Activated CD4-positive, alpha-beta T cell treated with anti-CD3 and anti-CD28 coated beads for 36 hours (primary cell): ENCODE measurements at regions of chr9 and their contacts with region 1.

Region 1: DNA sequence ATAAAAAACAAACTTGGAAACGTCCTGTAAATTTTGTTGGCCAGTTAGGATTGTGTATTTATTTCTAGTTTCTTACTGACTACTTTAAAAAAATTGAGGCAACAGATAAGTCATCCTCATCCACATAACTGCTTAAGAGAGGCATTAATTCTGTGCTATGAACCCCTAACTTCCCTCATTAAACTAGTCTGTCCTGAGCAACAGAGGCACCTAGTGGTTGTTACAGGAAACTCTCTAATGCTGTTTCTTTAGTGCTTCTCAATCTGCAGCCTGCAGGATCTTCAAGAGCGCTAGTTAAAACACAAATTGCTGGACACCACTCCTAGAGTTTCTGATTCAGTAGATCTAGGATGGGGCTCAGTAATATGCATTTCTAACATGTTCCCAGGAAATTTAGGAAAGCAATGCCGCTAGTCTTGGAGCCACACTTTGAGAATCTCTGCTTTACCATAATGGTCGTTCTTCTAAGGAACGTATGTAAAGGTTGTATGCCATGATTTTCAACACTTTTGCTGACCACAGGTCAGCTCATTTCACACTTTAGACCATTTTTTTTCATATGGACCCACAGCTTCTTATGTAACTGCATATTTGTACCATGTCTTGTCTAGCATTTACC is 410.1 kb upstream of the SMARCA2 start:
- DNase-seq: no peak
- ATAC-seq: no peak
- H3K4me3 Mint-ChIP-seq: no peak overlapping the region
- H3K27ac Mint-ChIP-seq: no peak overlapping the region
- H3K4me1 Mint-ChIP-seq: no peaks in the 10 kb centered on the region
- H3K27me3 Mint-ChIP-seq: peaks cover 18% of the 10 kb centered on the region

Region 2: DNA sequence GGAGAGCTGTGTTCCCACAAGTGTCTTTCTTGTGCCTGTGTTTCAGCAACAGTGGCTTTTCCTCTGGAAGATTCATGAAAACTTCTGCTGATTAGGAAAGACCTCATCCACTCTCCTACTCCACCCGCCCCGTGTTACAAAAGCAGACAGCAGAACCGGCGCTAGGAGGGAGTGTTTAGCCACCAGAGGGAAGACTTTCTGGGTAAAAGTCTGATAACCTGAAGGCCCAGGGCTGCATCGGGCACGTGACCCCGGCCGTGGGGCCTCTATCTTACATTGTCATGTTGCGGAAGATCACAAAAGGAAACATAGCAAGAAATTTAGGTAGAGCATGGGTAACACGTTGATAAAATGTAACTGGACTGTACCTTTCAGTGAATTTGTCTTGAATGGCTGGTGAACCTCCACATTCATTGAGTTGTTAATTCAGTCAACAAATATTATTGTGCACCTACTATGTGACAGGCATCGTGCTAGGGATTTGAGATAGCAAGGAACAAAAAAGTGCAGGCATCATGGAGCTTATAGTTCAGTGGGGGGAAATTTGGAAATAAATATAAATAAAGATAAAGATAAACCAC is 586.8 kb before region 1 on chr9:
- CTCF ChIA-PET with region 1: no interaction called
- POLR2A ChIA-PET with region 1: no interaction called
- intact Hi-C with region 1: loop called in 1 of 2 experiments (anchors 10 kb)
- DNase-seq: peak; percentile 46
- ATAC-seq: peak; percentile 39
- H3K4me3 Mint-ChIP-seq: no peak overlapping the region
- H3K27ac Mint-ChIP-seq: no peak overlapping the region
- H3K4me1 Mint-ChIP-seq: no peaks in the 10 kb centered on the region
- H3K27me3 Mint-ChIP-seq: peaks cover 30% of the 10 kb centered on the region

Region 3: DNA sequence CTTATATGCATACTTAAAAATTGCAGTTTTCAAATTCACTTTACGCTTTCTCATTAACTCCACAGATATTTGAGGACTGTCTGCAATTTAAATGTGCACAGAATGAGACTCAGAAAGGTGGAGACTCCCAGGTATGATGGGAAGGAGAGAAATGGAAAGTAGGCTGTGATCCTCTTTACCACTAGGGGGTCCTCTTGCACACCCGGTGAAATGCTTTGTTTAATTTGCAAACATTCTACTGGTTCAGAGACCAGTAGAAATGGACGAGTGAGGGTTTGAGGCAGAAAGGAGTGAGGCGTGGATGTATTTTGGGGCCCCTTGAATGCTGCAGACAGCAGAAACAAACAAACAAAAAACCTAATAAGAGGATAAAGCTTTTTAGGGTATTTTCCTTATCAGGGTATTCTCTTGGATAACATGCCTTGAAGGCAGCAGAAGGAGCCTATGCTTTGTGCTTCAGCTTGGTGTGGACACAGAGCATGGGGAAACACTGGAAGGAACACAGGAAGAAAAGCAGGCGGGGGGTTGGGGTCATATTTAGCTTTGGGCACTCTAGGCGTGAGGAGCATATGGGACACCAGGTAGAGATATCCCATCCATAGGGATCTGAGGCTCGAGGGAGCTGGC is 144.8 kb before region 1 on chr9:
- CTCF ChIA-PET with region 1: interaction called, 3 read pairs
- POLR2A ChIA-PET with region 1: no interaction called
- intact Hi-C with region 1: loop called (anchors 2 kb)
- DNase-seq: peak; percentile 30
- ATAC-seq: peak; percentile 42
- H3K4me3 Mint-ChIP-seq: no peak overlapping the region
- H3K27ac Mint-ChIP-seq: no peak overlapping the region
- H3K4me1 Mint-ChIP-seq: peaks cover 4% of the 10 kb centered on the region
- H3K27me3 Mint-ChIP-seq: peaks cover 10% of the 10 kb centered on the region